Caco-2 (cell line): ENCODE measurements at regions of chr13 and their contacts with region 1.

Region 1: DNA sequence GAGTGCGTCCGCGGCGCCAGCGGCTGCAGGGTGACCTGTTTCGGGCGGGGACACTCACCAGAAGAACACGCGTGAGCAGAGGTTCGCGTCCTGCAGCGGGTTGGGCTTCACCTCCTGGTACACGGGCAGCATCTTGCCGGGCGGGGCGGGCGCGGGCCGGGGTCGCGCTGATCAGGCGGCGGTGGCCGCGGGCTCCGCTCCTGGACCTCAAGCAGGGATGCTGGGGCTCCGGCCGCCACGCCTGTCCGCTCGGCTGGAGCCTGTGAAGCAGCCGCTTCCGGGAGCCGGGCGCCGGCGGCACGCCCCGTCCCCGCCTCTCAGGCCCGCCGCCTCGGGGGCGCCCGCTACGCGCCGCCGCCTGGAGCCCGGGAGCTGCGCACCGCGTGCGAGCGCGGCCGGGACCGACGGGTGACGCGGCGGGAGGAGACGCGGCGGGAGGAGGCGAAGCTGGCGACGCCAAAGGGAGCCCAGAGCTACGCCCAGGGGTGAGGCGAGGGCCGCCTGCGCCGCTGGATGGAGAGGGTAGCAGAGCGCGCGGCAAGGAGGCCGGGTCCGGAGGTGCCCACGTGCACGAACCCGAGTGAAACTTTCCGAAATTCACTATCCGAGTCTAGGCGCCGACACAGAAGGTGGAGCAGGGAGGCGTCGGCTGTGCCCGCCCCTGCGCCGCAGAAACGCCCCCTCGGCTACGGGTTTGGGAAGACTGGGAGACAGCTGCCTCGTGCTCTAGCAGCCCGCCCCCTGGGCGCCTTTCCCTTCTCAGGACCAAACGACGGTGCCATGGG is at the start of gene ABCC4:
- DNase-seq: peak; percentile 84 to 91
- H3K4me3 ChIP-seq: peak within 1 kb of the TSS; percentile 91
- H3K4me3 Mint-ChIP-seq: peak within 1 kb of the TSS; percentile 99
- H3K27ac Mint-ChIP-seq: peak within 1 kb of the TSS; percentile 88
- H3K4me1 ChIP-seq: peaks cover 46% of the 10 kb centered on the region
- H3K4me1 Mint-ChIP-seq: peaks cover 32% of the 10 kb centered on the region
- H3K27me3 ChIP-seq: no peaks in the 10 kb centered on the region
- H3K27me3 Mint-ChIP-seq: no peaks in the 10 kb centered on the region
- CTCF ChIP-seq: peak in 1 of 2 experiments; percentile 24
- total RNA-seq, gene ABCC4: 51.9 and 65.7 TPM in 2 replicates

Region 2: DNA sequence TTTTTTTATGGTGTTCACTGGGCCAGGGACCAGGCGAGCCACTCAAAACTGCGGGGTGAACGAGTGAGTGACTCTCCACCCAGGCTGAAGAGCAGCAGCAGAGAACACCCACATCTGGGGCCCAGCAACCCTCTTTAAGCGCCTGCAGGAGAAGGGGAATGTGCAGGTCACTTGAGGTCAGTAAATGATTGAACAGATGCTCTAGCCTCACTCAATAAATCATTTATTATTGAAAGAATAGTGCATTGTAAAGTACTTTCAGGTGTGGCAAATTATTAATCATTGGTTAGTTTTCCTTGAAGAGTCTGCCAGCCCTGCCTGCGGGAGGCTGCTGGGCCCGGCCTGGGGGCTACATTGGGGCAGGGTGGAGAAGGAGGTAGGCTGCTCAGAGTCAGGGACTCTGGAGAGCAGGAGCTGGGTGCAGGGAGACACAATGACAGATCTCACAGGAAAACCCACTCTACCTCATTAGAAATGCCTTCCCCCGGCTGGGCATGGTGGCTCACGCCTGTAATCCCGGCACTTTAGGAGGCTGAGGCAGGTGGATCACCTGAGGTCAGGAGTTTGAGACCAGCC is 42.7 kb before region 1 on chr13:
- CTCF ChIA-PET with region 1: no interaction called
- POLR2A ChIA-PET with region 1: no interaction called
- intact Hi-C with region 1: loop called (anchors 2 kb)
- DNase-seq: peak; percentile 64 to 80
- H3K4me3 ChIP-seq: no peak overlapping the region
- H3K4me3 Mint-ChIP-seq: peak overlapping the region; percentile 50
- H3K27ac Mint-ChIP-seq: peak overlapping the region; percentile 93
- H3K4me1 ChIP-seq: peaks cover 83% of the 10 kb centered on the region
- H3K4me1 Mint-ChIP-seq: peaks cover 41% of the 10 kb centered on the region
- H3K27me3 ChIP-seq: no peaks in the 10 kb centered on the region
- H3K27me3 Mint-ChIP-seq: no peaks in the 10 kb centered on the region
- CTCF ChIP-seq: no peak

Region 3: DNA sequence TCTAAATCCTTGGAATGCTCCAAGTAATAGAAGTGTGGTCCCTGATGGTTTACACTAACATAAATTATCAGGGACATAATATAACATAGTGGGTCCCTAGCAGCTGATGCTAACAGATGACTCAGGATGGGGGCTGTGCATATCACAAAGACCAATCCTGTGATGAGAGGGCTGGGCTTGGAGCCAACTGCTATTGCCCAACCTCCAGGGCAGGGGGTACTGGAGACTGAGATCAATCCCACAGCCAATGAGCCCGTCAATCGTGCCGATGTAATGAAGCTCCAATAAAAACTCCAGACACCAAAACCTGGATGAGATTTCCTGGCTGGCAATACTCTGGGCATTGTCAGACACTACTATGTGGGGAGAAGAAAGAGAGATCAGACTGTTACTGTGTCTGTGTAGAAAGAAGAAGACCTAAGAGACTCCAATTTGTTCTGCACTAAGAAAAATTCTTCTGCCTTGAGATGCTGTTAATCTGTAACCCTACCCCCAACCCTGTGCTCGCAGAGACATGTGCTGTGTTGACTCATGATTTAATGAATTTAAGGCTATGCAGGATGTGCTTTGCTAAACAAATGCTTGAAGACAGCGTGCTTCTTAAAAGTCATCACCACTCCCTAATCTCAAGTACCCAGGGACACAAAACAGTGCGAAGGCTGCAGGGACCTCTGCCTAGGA is 33.6 kb before region 1 on chr13:
- CTCF ChIA-PET with region 1: interaction called, 5 read pairs
- POLR2A ChIA-PET with region 1: interaction called, 4 read pairs
- intact Hi-C with region 1: loop called (anchors 1 kb)
- DNase-seq: peak; percentile 49 to 53
- H3K4me3 ChIP-seq: no peak overlapping the region
- H3K4me3 Mint-ChIP-seq: peak overlapping the region; percentile 51
- H3K27ac Mint-ChIP-seq: peak overlapping the region; percentile 69
- H3K4me1 ChIP-seq: peaks cover 42% of the 10 kb centered on the region
- H3K4me1 Mint-ChIP-seq: peaks cover 38% of the 10 kb centered on the region
- H3K27me3 ChIP-seq: no peaks in the 10 kb centered on the region
- H3K27me3 Mint-ChIP-seq: no peaks in the 10 kb centered on the region
- CTCF ChIP-seq: no peak

Region 4: GRCh38 chr13:95275322-95276036 is 25.9 kb before region 1 on chr13:
- CTCF ChIA-PET with region 1: interaction called, 6 read pairs
- POLR2A ChIA-PET with region 1: interaction called, 7 read pairs
- intact Hi-C with region 1: loop called (anchors 1 kb)
- DNase-seq: peak in 1 of 2 experiments; percentile 62
- H3K4me3 ChIP-seq: no peak overlapping the region
- H3K4me3 Mint-ChIP-seq: peak overlapping the region; percentile 50
- H3K27ac Mint-ChIP-seq: peak overlapping the region; percentile 61
- H3K4me1 ChIP-seq: peaks cover 65% of the 10 kb centered on the region
- H3K4me1 Mint-ChIP-seq: peaks cover 64% of the 10 kb centered on the region
- H3K27me3 ChIP-seq: no peaks in the 10 kb centered on the region
- H3K27me3 Mint-ChIP-seq: no peaks in the 10 kb centered on the region
- CTCF ChIP-seq: no peak

Region 5: GRCh38 chr13:95378603-95379002 is 77.2 kb after region 1 on chr13:
- CTCF ChIA-PET with region 1: interaction called, 25 read pairs
- POLR2A ChIA-PET with region 1: no interaction called
- intact Hi-C with region 1: loop called (anchors 1 kb)
- DNase-seq: no peak
- H3K4me3 ChIP-seq: no peak overlapping the region
- H3K4me3 Mint-ChIP-seq: no peak overlapping the region
- H3K27ac Mint-ChIP-seq: no peak overlapping the region
- H3K4me1 ChIP-seq: no peaks in the 10 kb centered on the region
- H3K4me1 Mint-ChIP-seq: peaks cover 11% of the 10 kb centered on the region
- H3K27me3 ChIP-seq: no peaks in the 10 kb centered on the region
- H3K27me3 Mint-ChIP-seq: no peaks in the 10 kb centered on the region
- CTCF ChIP-seq: no peak